ENCODE measurements at regions of chr15 and their contacts with region 1.

Region 1: DNA sequence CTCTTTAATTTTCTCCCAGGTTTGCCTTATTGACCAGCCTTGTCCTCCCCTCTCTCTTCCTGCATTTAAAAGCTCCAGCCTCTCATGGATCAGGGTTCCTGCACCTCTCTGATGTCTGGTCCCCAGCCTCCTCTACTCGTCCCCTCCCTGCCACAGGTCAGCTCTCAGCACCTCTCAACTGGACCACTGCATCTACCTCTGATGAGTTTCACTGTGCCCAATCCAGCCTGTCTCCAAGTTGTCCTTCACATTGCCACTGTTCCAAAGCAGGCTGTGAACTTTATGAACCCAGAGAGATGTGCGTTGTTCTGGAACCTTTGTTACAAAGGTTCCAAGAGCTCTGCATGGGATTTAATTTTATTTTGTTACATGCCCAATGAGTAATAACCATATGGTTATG is 76.6 kb downstream of the SLCO3A1 start:
- DNase-seq: no peak
- H3K4me3 ChIP-seq: no peak overlapping the region
- H3K27ac ChIP-seq: peak overlapping the region in 1 of 2 donors; percentile 41
- H3K4me1 ChIP-seq: peaks cover 0 to 4% of the 10 kb centered on the region in 2 donors
- H3K27me3 ChIP-seq: no peaks in the 10 kb centered on the region
- CTCF ChIP-seq: no peak
- POLR2A ChIP-seq: no peak

Region 2: GRCh38 chr15:91904942-91905341 is 25.1 kb before region 1 on chr15:
- intact Hi-C with region 1: loop called (anchors 2 kb)
- DNase-seq: no peak
- H3K4me3 ChIP-seq: no peak overlapping the region
- H3K27ac ChIP-seq: no peak overlapping the region
- H3K4me1 ChIP-seq: no peaks in the 10 kb centered on the region
- H3K27me3 ChIP-seq: no peaks in the 10 kb centered on the region
- CTCF ChIP-seq: no peak
- POLR2A ChIP-seq: no peak

Region 3: GRCh38 chr15:91919014-91919534 is 11.0 kb before region 1 on chr15:
- intact Hi-C with region 1: no loop called
- DNase-seq: no peak
- H3K4me3 ChIP-seq: no peak overlapping the region
- H3K27ac ChIP-seq: peak overlapping the region in 1 of 2 donors; percentile 59
- H3K4me1 ChIP-seq: no peaks in the 10 kb centered on the region
- H3K27me3 ChIP-seq: no peaks in the 10 kb centered on the region
- CTCF ChIP-seq: no peak
- POLR2A ChIP-seq: no peak

Region 4: GRCh38 chr15:91942676-91943576 is 12.8 kb after region 1 on chr15:
- intact Hi-C with region 1: no loop called
- DNase-seq: peak; percentile 74 to 93
- H3K4me3 ChIP-seq: peak overlapping the region; percentile 10 to 40 (median 11)
- H3K27ac ChIP-seq: peak overlapping the region; percentile 89
- H3K4me1 ChIP-seq: peaks cover 24 to 31% of the 10 kb centered on the region in 2 donors
- H3K27me3 ChIP-seq: no peaks in the 10 kb centered on the region
- CTCF ChIP-seq: no peak
- POLR2A ChIP-seq: no peak

Measured in breast epithelium (tissue), 4 donors.